HepG2 (cell line): ENCODE measurements at regions of chr2 and their contacts with region 1.

Region 1: GRCh38 chr2:97747716-97748115 is 34.3 kb downstream of the ZAP70 start:
- DNase-seq: no peak
- ATAC-seq: no peak
- H3K4me3 ChIP-seq: no peak overlapping the region
- H3K27ac ChIP-seq: no peak overlapping the region
- H3K4me1 ChIP-seq: peaks cover 19% of the 10 kb centered on the region
- H3K27me3 ChIP-seq: no peaks in the 10 kb centered on the region
- CTCF ChIP-seq: no peak
- EP300 ChIP-seq: no peak
- POLR2A ChIP-seq: no peak
- RAD21 ChIP-seq: no peak

Region 2: GRCh38 chr2:97710596-97711386 is 36.9 kb before region 1 on chr2:
- CTCF ChIA-PET with region 1: interaction called, 12 read pairs
- POLR2A ChIA-PET with region 1: no interaction called
- in situ Hi-C with region 1: no loop called
- intact Hi-C with region 1: no loop called
- DNase-seq: no peak
- ATAC-seq: no peak
- H3K4me3 ChIP-seq: no peak overlapping the region
- H3K27ac ChIP-seq: no peak overlapping the region
- H3K4me1 ChIP-seq: peaks cover 14% of the 10 kb centered on the region
- H3K27me3 ChIP-seq: peaks cover 4 to 30% of the 10 kb centered on the region in 2 experiments
- CTCF ChIP-seq: no peak
- EP300 ChIP-seq: no peak
- POLR2A ChIP-seq: no peak
- RAD21 ChIP-seq: no peak